ENCODE measurements at regions of chr4 and their contacts with region 1.

Region 1: DNA sequence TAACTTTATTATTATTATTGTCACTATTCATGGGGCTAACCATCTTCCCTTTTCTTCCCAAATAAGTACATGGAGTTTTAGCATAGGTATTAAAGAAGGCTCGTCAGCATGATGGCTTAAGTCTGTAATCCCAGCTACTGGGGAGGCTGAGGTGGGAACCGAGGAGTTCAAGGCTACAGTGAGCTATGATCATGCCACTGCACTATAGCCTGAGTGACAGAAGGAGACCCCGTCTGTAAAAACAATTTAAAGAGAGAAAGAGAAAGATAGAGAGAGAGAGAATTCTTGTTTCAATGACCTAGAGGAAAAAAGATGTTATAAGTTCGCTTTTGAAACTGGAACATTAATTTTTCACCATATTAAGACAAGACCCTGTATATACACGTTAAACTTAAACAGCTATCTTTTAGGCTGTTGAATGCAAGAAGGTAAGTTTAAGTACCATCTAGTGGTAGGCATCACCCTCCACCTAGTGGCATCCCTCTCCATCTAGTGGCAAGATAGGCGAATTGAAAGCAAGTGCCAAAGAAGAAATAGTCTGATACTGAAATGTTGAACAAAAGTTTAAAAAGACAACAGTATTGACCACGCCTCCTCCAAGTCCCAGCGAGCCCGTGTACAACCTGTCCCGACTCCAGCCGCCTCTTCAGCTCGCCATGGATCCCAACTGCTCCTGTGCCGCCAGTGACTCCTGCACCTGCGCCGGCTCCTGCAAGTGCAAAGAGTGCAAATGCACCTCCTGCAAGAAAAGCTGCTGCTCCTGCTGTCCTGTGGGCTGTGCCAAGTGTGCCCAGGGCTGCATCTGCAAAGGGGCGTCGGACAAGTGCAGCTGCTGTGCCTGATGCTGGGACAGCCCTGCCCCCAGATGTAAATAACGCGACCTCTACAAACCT is 26.0 kb upstream of the YTHDC1 start:
- DNase-seq: no peak
- ATAC-seq: peak; percentile 91
- H3K4me3 ChIP-seq: no peak overlapping the region
- H3K27ac ChIP-seq: no peak overlapping the region
- H3K4me1 ChIP-seq: no peaks in the 10 kb centered on the region
- H3K27me3 ChIP-seq: no peaks in the 10 kb centered on the region; a peak in 1 of 4 replicates
- CTCF ChIP-seq: peak; percentile 78 to 97 (median 84)
- EP300 ChIP-seq: no peak
- POLR2A ChIP-seq: no peak
- RAD21 ChIP-seq: peak; percentile 87

Region 2: GRCh38 chr4:67101612-67102011 is 1274.3 kb before region 1 on chr4:
- CTCF ChIA-PET with region 1: no interaction called
- POLR2A ChIA-PET with region 1: interaction called, 14 read pairs
- RAD21 ChIA-PET with region 1: no interaction called
- SMC1A ChIA-PET with region 1: no interaction called
- in situ Hi-C with region 1: no loop called
- intact Hi-C with region 1: no loop called
- DNase-seq: no peak
- ATAC-seq: no peak
- H3K4me3 ChIP-seq: no peak overlapping the region
- H3K27ac ChIP-seq: no peak overlapping the region
- H3K4me1 ChIP-seq: no peaks in the 10 kb centered on the region
- H3K27me3 ChIP-seq: no peaks in the 10 kb centered on the region
- CTCF ChIP-seq: no peak
- EP300 ChIP-seq: no peak
- POLR2A ChIP-seq: no peak
- RAD21 ChIP-seq: no peak

Region 3: DNA sequence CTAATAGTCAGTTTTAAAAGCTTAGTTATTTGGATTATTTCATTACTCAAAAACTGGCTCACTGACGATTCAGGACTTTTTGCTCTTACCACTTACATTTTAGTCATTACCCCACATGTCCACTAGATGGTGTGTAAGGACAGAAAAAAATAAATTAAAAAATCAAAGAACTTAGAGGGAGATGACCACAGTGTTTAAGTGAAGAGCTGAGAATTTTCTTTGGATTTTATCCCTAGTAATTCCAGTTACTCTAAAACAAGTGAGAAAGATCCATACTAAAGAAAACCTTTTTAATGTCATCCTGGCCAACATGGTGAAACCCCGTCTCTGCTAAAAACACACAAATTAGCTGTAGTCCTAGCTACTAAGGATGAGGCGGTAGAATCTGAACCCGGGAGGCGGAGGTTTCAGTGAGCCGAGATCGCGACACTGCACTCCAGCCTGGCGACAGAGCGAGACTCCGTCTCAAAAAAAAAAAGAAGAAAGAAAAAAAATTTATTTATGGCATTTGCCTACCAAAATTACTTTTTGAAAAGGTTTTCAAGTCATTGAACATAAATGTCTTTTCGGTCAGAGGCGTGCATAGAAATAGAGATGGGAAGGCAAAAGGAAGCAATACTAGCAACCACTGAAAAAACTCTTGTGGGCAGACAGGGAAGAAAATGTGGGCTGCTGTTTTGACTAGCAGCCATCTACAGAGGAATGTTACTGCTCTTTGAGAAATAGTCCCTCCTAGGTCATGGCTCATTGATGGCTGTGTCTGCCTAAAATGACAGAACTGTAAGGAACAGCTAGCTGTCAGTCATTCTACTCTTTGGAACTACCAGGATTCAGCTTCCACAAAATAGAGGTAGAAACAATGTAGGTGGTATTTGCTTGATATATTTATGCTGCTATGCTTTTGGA is 103.8 kb before region 1 on chr4:
- CTCF ChIA-PET with region 1: interaction called, 95 read pairs
- POLR2A ChIA-PET with region 1: no interaction called
- RAD21 ChIA-PET with region 1: interaction called, 33 read pairs
- SMC1A ChIA-PET with region 1: interaction called, 37 read pairs
- in situ Hi-C with region 1: loop called (anchors 5 kb)
- intact Hi-C with region 1: loop called (anchors 1 kb)
- DNase-seq: no peak
- ATAC-seq: peak; percentile 80
- H3K4me3 ChIP-seq: no peak overlapping the region
- H3K27ac ChIP-seq: no peak overlapping the region
- H3K4me1 ChIP-seq: no peaks in the 10 kb centered on the region
- H3K27me3 ChIP-seq: no peaks in the 10 kb centered on the region; a peak in 1 of 4 replicates
- CTCF ChIP-seq: peak; percentile 48 to 66 (median 53); a peak in 5 of 6 replicates
- EP300 ChIP-seq: no peak
- POLR2A ChIP-seq: no peak
- RAD21 ChIP-seq: peak; percentile 72

Region 4: DNA sequence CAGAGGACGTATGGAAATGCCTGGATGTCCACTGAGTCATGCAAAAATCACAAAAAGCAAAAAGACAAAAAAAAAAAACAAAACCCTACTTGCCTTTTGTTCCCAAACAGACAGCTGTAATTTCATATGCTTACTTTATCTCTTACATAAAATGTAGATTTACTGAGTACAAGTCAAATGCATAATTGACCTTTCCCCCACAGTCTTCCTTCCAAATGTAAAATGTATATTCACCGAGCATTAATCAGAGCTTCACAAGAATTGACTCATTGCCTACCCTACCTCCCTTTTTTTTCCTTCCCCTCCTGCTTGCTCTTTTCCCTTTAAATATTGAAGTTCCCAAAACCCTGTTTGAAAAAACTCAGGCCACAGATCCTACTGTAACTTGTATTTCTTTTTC is 97.9 kb before region 1 on chr4:
- CTCF ChIA-PET with region 1: interaction called, 95 read pairs
- POLR2A ChIA-PET with region 1: no interaction called
- RAD21 ChIA-PET with region 1: interaction called, 33 read pairs
- SMC1A ChIA-PET with region 1: interaction called, 37 read pairs
- in situ Hi-C with region 1: loop called (anchors 5 kb)
- intact Hi-C with region 1: no loop called
- DNase-seq: no peak
- ATAC-seq: no peak
- H3K4me3 ChIP-seq: no peak overlapping the region
- H3K27ac ChIP-seq: no peak overlapping the region
- H3K4me1 ChIP-seq: no peaks in the 10 kb centered on the region
- H3K27me3 ChIP-seq: no peaks in the 10 kb centered on the region; a peak in 1 of 4 replicates
- CTCF ChIP-seq: no peak
- EP300 ChIP-seq: no peak
- POLR2A ChIP-seq: no peak
- RAD21 ChIP-seq: no peak

Region 5: DNA sequence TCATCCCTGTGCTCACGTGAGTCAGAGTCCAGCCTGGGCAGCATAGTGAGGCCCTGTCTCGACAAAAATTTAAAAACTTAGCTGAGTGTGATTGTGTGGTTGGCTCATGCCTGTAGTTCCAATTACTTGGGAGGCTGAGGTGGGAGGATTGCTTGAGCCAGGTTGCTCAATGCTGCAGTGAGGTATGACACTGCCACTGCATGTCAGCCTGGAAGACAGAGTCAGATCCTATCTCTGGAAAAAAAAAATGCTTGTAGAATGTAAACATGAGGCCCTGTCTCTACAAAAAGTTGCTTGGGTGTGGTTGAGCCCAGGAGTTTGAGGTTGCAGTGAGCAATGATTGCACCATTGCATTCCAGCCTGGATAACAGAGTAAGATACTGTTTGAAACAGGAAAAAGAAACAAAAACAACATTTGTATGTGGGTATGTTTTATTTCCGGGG is 14.7 kb before region 1 on chr4:
- CTCF ChIA-PET with region 1: interaction called, 10 read pairs
- POLR2A ChIA-PET with region 1: no interaction called
- RAD21 ChIA-PET with region 1: no interaction called
- SMC1A ChIA-PET with region 1: interaction called, 7 read pairs
- in situ Hi-C with region 1: no loop called
- intact Hi-C with region 1: no loop called
- DNase-seq: no peak
- ATAC-seq: no peak
- H3K4me3 ChIP-seq: no peak overlapping the region
- H3K27ac ChIP-seq: no peak overlapping the region
- H3K4me1 ChIP-seq: no peaks in the 10 kb centered on the region
- H3K27me3 ChIP-seq: no peaks in the 10 kb centered on the region
- CTCF ChIP-seq: no peak
- EP300 ChIP-seq: no peak
- POLR2A ChIP-seq: no peak
- RAD21 ChIP-seq: no peak

Region 6: GRCh38 chr4:68430337-68430736 is 54.4 kb after region 1 on chr4:
- CTCF ChIA-PET with region 1: no interaction called
- POLR2A ChIA-PET with region 1: no interaction called
- RAD21 ChIA-PET with region 1: no interaction called
- SMC1A ChIA-PET with region 1: no interaction called
- in situ Hi-C with region 1: no loop called
- intact Hi-C with region 1: no loop called
- DNase-seq: no peak
- ATAC-seq: no peak
- H3K4me3 ChIP-seq: no peak overlapping the region
- H3K27ac ChIP-seq: no peak overlapping the region
- H3K4me1 ChIP-seq: no peaks in the 10 kb centered on the region
- H3K27me3 ChIP-seq: no peaks in the 10 kb centered on the region
- CTCF ChIP-seq: no peak
- EP300 ChIP-seq: no peak
- POLR2A ChIP-seq: no peak
- RAD21 ChIP-seq: no peak

Region 7: GRCh38 chr4:68630373-68630772 is 254.5 kb after region 1 on chr4:
- CTCF ChIA-PET with region 1: no interaction called
- POLR2A ChIA-PET with region 1: no interaction called
- RAD21 ChIA-PET with region 1: no interaction called
- SMC1A ChIA-PET with region 1: no interaction called
- in situ Hi-C with region 1: loop called (anchors 25 kb)
- intact Hi-C with region 1: no loop called
- DNase-seq: no peak
- ATAC-seq: no peak
- H3K4me3 ChIP-seq: no peak overlapping the region
- H3K27ac ChIP-seq: no peak overlapping the region
- H3K4me1 ChIP-seq: no peaks in the 10 kb centered on the region
- H3K27me3 ChIP-seq: no peaks in the 10 kb centered on the region
- CTCF ChIP-seq: no peak
- EP300 ChIP-seq: no peak
- POLR2A ChIP-seq: no peak
- RAD21 ChIP-seq: no peak